Pancreas (tissue), 10 donors: ENCODE measurements at regions of chr1 and their contacts with region 1.

Region 1: DNA sequence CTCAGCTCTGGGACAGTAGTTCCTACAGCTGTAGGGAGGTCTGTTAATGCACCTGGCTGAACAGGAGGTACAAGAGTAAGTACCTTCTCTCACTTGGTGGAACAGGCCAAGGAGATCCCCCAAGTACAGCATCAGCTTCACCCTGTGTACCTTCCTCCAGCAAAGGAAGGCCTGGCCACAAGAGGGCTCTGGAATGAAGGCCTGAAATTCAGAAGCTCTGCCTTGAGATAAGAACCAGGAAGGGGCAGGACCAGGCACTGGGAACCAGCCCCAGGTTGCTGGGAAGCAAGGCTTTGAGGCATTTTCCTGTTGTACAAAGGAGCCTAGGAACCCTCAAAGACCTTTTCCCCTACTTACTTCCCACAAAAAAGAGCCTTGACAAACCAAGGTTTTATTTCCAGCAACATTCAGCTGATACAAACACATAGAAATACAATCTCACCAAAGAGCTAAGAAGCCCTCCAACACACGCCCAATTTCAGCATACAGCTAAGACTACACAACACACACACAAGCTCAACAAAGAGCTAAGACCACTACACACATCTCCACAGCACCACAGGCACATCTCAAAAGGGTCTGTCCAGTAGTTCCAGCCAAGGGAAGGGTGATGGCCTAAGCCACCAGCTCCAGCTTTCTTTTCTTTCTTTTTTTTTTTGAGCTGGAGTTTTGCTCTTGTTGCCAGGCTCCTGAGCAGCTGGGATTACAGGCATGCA is 23.5 kb downstream of the F11R start:
- DNase-seq: peak in 5 of 6 donors; percentile 50 to 71 (median 67)
- ATAC-seq: peak; percentile 79 to 96 (median 93)
- H3K4me3 ChIP-seq: no peak overlapping the region
- H3K27ac ChIP-seq: peak overlapping the region in 2 of 4 donors; percentile 25 to 53
- H3K4me1 ChIP-seq: no peaks in the 10 kb centered on the region
- H3K27me3 ChIP-seq: no peaks in the 10 kb centered on the region
- CTCF ChIP-seq: peak in 3 of 4 donors; percentile 30 to 50 (median 45)

Region 2: GRCh38 chr1:161045750-161046571 is 48.5 kb after region 1 on chr1 and contains the start of gene USF1:
- intact Hi-C with region 1: no loop called
- DNase-seq: peak; percentile 90 to 96 (median 92)
- ATAC-seq: peak; percentile 94 to 98 (median 96)
- H3K4me3 ChIP-seq: peak within 1 kb of the TSS; percentile 80 to 96 (median 92)
- H3K27ac ChIP-seq: peak within 1 kb of the TSS; percentile 84 to 95 (median 84)
- H3K4me1 ChIP-seq: peaks cover 0 to 6% (median 6%) of the 10 kb centered on the region in 3 donors
- H3K27me3 ChIP-seq: no peaks in the 10 kb centered on the region
- CTCF ChIP-seq: no peak
- total RNA-seq, gene USF1: 15.8 to 33.2 (median 21.7) TPM

Region 3: GRCh38 chr1:161098210-161099068 is 101.0 kb after region 1 on chr1 and contains the start of gene KLHDC9:
- intact Hi-C with region 1: loop called in 1 of 3 experiments (anchors 10 kb)
- DNase-seq: peak; percentile 88 to 95 (median 92)
- ATAC-seq: peak; percentile 92 to 97 (median 94)
- H3K4me3 ChIP-seq: peak within 1 kb of the TSS; percentile 61 to 86 (median 76)
- H3K27ac ChIP-seq: peak within 1 kb of the TSS; percentile 38 to 64 (median 58)
- H3K4me1 ChIP-seq: peaks cover 0 to 10% (median 3%) of the 10 kb centered on the region in 3 donors
- H3K27me3 ChIP-seq: no peaks in the 10 kb centered on the region
- CTCF ChIP-seq: peak in 2 of 4 donors; percentile 6 to 7
- total RNA-seq, gene KLHDC9: 3.2 to 7.9 (median 6.2) TPM

Region 4: DNA sequence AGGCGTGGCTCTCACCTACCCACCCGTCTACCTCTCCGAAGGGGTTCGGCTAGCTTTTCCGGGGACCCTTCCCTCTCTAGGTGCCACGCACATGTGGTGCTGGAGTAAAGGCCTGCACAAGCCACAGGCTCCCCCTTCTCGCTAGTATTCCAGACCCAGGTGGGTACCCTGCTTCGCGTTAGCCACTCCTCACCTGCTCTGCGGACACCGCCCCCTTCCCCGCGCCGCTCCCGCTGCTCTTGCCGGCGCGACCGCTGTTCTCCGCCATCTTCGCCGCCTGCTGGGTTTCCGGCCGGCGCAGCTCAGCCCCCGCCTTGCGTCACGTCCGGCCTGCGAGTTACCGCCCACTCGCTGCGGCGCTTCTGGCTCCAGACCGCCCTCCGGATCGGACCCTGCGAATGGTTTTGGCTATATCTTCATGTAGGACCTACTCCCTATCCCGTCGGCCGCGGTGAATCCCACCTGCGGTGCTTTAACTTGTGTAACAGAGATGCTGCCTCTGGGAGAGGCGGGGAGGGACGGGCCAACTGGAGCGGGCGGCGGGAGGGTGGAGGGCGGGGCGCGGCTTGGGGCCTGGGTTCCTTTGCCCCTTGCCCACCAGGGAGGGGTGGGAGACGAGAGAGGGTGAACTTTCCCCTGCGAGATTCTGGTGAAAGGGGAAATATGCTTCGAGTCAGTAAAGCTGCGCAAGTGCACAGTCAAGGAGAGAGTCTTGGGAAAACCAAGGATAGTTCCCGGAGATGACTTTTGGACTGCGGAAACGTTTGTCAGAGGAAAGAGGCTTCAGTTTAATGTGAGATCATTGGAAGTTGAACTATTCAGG is 120.5 kb after region 1 on chr1 and contains the starts of genes NIT1 and PFDN2:
- intact Hi-C with region 1: no loop called
- DNase-seq: peak; percentile 78 to 93 (median 83)
- ATAC-seq: peak; percentile 81 to 94 (median 88)
- H3K4me3 ChIP-seq: peak within 1 kb of the TSS; percentile 60 to 97 (median 90)
- H3K27ac ChIP-seq: peak within 1 kb of the TSS; percentile 77 to 95 (median 86)
- H3K4me1 ChIP-seq: peaks cover 39 to 42% (median 41%) of the 10 kb centered on the region in 3 donors
- H3K27me3 ChIP-seq: no peaks in the 10 kb centered on the region
- CTCF ChIP-seq: no peak
- total RNA-seq, gene NIT1: 17.9 to 25.1 (median 19.9) TPM
- total RNA-seq, gene PFDN2: 9.8 to 24.8 (median 18.0) TPM

Region 5: GRCh38 chr1:161139765-161140164 is 142.3 kb after region 1 on chr1:
- intact Hi-C with region 1: loop called in 1 of 3 experiments (anchors 10 kb)
- DNase-seq: peak in 1 of 6 donors; percentile 55
- ATAC-seq: peak; percentile 74 to 88 (median 80)
- H3K4me3 ChIP-seq: no peak overlapping the region
- H3K27ac ChIP-seq: no peak overlapping the region
- H3K4me1 ChIP-seq: no peaks in the 10 kb centered on the region
- H3K27me3 ChIP-seq: no peaks in the 10 kb centered on the region
- CTCF ChIP-seq: peak in 2 of 4 donors; percentile 43 to 47